ENCODE measurements at regions of chr7 and their contacts with region 1.

Region 1: DNA sequence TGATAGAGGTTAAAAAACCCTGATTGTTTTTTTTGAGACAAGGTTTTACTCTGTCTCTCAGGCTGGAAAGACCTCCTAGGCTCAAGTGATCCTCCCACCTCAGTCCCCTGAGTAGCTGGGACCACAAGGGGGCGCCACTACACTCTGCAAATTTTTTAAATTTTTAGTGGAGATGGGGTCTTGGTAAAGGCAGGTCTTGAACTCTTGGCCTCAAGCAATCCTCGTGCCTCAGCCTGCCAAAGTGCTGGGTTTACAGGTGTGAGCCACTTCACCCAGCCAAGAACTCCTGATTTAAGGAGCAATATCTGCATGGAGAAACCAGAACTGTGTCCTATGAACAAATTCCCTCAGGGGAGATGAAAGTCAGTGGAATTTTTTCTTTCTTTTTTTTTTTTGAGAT is 7.3 kb upstream of the KLHDC10 start:
- DNase-seq: peak; percentile 90
- H3K4me3 Mint-ChIP-seq: no peak overlapping the region
- H3K27ac Mint-ChIP-seq: no peak overlapping the region
- H3K4me1 Mint-ChIP-seq: peaks cover 2% of the 10 kb centered on the region
- H3K27me3 Mint-ChIP-seq: no peaks in the 10 kb centered on the region

Region 2: DNA sequence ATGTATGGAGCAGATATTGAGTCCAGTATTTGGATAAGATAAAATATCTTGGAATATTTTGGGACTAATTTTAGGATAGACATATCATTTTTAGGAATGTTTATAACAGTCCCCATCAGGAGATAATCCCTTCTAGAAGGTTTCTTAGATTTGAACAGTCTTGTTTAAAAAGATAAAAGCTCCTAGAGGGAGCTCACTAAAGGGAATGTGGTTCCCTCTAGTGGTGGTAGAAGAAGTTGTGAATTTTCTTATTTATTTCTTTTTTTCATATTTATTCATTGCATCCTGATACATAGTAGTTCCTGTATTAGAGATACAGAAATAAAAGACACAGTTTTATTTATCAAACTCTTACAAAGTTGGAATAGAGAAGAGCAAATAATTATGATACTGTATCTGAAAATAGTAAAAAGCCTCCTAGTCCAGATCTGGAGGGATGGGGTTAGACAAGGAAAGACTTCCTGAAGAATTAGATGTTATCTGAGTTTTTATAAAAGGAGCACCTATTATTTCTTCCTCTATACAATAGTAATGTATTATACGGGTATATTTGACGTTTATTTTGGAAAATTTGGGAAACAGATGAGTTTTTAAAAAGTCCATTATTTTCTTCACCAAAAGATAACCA is 695.5 kb after region 1 on chr7:
- intact Hi-C with region 1: loop called (anchors 2 kb)
- DNase-seq: no peak
- H3K4me3 Mint-ChIP-seq: no peak overlapping the region
- H3K27ac Mint-ChIP-seq: no peak overlapping the region
- H3K4me1 Mint-ChIP-seq: no peaks in the 10 kb centered on the region
- H3K27me3 Mint-ChIP-seq: peaks cover 17% of the 10 kb centered on the region

Measured in activated CD4-positive, alpha-beta T cell treated with anti-CD3 and anti-CD28 coated beads, Interleukin-2, amount 10 ng/mL, durations not matched to agents 24 days and 14 days (primary cell).